ENCODE measurements at regions of chr3 and their contacts with region 1.

Region 1: DNA sequence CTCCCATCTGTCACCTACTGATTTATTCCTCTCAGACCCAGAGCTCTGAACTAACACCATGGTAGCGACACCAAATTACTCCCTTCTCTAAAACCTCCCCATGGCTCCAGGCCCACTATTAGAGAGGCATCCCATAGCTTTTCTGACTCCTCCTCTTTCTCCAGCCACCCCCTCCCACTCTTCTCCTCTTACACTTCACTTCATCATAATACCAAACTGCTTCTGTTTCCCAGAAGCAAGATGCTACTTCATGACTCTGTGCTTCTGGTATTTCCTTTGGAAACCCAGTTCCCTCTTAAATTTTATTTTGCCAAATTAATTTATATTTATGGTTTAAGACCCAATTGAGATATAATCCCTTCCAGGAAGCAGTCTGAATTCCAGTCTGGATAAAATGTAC is 465.1 kb upstream of the PDZRN3 start:
- DNase-seq: no peak
- H3K4me3 ChIP-seq: no peak overlapping the region
- H3K27ac ChIP-seq: no peak overlapping the region
- H3K4me1 ChIP-seq: no peaks in the 10 kb centered on the region
- H3K27me3 ChIP-seq: no peaks in the 10 kb centered on the region
- CTCF ChIP-seq: no peak

Region 2: DNA sequence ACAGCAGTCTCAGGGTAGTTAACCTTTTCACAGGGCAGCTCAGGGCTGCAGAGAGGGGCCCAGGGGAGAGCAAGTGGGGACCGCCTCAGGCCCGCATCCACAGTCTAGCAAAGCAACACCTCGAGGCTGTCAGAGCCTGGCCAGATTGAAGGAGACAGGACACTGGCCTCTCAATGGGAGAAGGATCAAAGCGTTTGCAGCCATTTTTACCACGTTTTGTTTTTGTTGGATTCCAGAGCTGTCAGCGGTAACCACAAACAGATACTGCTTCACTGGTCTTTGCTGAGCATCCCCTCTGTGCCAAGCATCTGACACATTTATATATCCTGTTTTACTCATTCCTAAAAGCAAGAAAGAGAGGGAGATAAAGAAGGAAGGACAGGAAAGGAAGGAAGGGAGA is 1395.4 kb before region 1 on chr3:
- intact Hi-C with region 1: loop called (anchors 5 kb)
- DNase-seq: no peak
- H3K4me3 ChIP-seq: no peak overlapping the region
- H3K27ac ChIP-seq: no peak overlapping the region
- H3K4me1 ChIP-seq: no peaks in the 10 kb centered on the region
- H3K27me3 ChIP-seq: peaks cover 0 to 5% of the 10 kb centered on the region in 2 donors
- CTCF ChIP-seq: no peak

Region 3: GRCh38 chr3:73915886-73916285 is 173.9 kb before region 1 on chr3:
- intact Hi-C with region 1: no loop called
- DNase-seq: no peak
- H3K4me3 ChIP-seq: no peak overlapping the region
- H3K27ac ChIP-seq: no peak overlapping the region
- H3K4me1 ChIP-seq: no peaks in the 10 kb centered on the region
- H3K27me3 ChIP-seq: peaks cover 0 to 5% of the 10 kb centered on the region in 2 donors
- CTCF ChIP-seq: no peak